ENCODE measurements at regions of chr12 and their contacts with region 1.

Region 1: DNA sequence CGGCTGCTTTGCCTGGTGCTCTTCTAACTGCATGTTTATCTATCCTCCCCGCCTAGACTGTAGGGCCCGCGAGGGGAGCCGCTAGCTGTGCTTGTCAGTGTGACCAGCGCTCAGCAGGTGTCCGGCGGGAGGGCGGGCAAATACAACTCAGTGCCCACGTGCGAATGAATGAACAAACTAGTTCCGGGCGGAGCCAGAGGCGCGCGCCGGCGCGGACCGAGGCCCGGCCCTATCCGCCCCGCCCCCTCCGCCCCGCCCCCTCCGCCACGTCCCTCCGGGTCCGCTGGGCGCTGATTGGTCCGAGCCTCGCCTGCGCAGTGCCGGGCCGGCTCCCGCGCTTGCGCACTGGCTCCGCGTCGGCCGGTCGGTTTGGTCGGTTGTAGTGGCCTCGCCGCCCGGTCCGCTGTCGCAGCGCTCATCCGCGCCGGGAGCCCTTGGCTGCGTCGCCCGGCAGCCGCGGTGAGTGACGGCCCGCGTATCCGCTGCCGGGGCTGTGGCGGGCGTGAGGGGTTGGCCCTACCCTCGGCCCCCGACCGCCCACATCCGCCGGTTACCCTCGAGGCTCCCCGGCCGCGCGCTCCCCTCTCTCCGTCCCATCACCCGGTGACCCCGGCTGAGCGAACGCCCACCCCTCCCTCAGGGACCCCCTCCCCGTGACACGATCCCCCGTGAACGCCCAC is 60.0 kb downstream of the DDX51 start:
- DNase-seq: peak; percentile 88
- ATAC-seq: peak; percentile 93
- H3K4me3 Mint-ChIP-seq: peak overlapping the region; percentile 90
- H3K27ac Mint-ChIP-seq: peak overlapping the region; percentile 88
- H3K4me1 Mint-ChIP-seq: peaks cover 22% of the 10 kb centered on the region
- H3K27me3 Mint-ChIP-seq: no peaks in the 10 kb centered on the region
- CTCF ChIP-seq: no peak

Region 2: GRCh38 chr12:131894313-131894860 is 189.7 kb before region 1 on chr12 and contains the start of gene ULK1:
- CTCF ChIA-PET with region 1: no interaction called
- POLR2A ChIA-PET with region 1: no interaction called
- intact Hi-C with region 1: loop called (anchors 1 kb)
- DNase-seq: peak; percentile 97
- ATAC-seq: peak; percentile 86
- H3K4me3 Mint-ChIP-seq: peak within 1 kb of the TSS; percentile 82
- H3K27ac Mint-ChIP-seq: peak within 1 kb of the TSS; percentile 46
- H3K4me1 Mint-ChIP-seq: peaks cover 22% of the 10 kb centered on the region
- H3K27me3 Mint-ChIP-seq: peaks cover 3% of the 10 kb centered on the region
- CTCF ChIP-seq: no peak
- total RNA-seq, gene ULK1: 20.1 and 27.0 TPM in 2 replicates

Region 3: DNA sequence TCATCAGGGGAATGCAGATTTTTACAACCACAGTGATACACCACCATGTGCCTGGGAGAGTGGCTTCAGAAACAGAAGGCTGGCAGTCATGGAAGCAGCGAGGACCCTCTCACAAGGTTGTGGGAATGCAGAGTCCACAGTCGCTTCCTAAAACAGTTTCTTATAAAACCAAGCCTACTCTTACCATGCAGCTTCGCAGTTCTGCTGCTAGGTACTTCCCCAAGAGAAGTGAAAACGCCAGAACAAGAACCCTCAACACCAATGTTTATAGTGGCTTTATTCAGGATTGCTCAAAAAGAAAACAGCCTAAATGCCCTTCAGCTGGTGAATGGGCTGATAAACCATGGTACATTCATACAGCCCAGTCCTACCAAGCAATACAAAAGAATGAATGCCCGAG is 27.1 kb before region 1 on chr12:
- CTCF ChIA-PET with region 1: no interaction called
- POLR2A ChIA-PET with region 1: no interaction called
- intact Hi-C with region 1: loop called (anchors 2 kb)
- DNase-seq: no peak
- ATAC-seq: peak; percentile 71
- H3K4me3 Mint-ChIP-seq: peak overlapping the region; percentile 24
- H3K27ac Mint-ChIP-seq: peak overlapping the region; percentile 61
- H3K4me1 Mint-ChIP-seq: peaks cover 39% of the 10 kb centered on the region
- H3K27me3 Mint-ChIP-seq: no peaks in the 10 kb centered on the region
- CTCF ChIP-seq: no peak

Region 4: DNA sequence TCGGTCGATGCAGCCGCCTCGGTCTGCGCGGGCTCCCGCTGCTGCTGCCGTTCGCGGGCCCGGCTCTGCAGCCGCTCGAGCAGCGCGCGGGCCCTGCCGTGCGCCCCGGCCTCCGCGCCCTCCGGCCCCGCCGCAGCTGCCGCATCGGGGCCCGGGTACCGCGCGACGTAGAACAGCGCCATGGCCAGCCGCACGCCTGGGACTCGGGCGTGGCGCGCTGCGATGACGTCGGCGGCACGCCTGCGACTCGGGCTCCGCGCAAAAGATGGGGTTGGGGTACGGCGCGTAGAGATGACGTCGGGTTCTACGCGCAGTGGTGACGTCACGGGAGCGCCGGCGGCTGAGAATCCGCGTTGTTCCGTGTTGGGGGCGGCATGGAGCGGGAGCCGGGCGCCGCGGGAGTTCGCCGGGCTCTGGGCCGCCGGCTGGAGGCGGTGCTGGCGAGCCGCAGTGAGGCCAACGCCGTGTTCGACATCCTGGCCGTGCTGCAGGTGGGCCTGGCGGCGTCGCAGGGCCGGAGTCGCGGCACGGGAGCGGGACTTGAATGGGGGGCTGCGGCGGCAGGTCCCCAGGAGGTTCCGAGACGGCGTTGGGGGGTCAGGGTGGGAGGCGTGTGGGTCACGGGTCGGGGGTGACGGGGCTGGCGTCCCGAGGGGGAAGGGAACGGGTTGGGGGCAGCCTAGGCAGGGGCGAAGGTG is 60.2 kb after region 1 on chr12 and contains the starts of genes DDX51 and NOC4L:
- CTCF ChIA-PET with region 1: no interaction called
- POLR2A ChIA-PET with region 1: no interaction called
- intact Hi-C with region 1: loop called (anchors 1 kb)
- DNase-seq: peak; percentile 99
- ATAC-seq: peak; percentile 93
- H3K4me3 Mint-ChIP-seq: peak within 1 kb of the TSS; percentile 91
- H3K27ac Mint-ChIP-seq: peak within 1 kb of the TSS; percentile 94
- H3K4me1 Mint-ChIP-seq: peaks cover 35% of the 10 kb centered on the region
- H3K27me3 Mint-ChIP-seq: no peaks in the 10 kb centered on the region
- CTCF ChIP-seq: no peak
- total RNA-seq, gene DDX51: 39.9 and 43.0 TPM in 2 replicates
- total RNA-seq, gene NOC4L: 28.1 and 29.1 TPM in 2 replicates